PC-9 (cell line): ENCODE measurements at regions of chr16 and their contacts with region 1.

Region 1: DNA sequence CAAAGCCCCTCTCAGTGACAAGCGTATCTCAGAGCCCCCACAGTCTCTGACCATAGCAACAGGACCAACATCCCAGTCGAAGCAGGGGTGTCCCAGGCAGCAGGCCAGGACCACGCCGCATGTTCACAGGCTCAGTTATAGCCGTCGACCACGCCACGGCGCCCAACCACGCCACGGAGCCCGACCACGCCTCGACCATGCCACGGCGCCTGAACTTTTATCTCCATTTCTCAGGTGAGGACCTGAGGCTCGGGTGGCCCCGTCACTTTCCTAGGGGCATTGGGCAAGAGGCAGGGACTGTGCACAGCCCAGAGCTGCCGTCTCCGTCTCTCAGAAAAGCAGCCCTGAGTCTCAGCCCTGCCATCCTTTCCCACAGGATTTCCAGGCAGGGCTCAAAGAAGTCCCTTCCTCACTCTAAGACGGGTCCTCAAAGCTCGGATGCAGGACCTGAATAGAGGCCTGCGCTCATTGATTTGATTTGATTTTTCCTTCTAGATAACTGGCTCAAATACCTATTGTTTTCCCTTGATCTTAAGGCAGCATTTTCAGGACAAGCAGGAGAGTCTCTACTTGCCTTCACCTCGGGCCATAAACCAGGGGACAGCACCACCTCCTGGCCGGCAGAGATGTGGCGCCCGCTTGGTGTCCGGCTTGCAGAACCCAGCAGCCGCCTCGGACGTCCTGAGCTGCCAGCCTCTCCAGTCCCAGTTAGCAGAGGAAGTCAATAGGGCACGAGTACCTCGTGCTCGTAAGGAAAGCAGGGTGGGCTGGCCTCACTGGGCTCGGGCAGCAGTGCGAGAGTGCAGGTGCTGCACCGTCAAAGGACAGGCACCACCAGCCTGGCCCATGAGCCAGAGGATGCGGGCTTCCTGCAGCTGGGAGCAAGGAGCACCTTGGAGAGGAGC is 38.7 kb downstream of the C16orf95 start:
- DNase-seq: peak; percentile 50 to 79
- H3K4me3 ChIP-seq: no peak overlapping the region
- H3K27ac ChIP-seq: no peak overlapping the region
- H3K4me1 ChIP-seq: no peaks in the 10 kb centered on the region
- H3K27me3 ChIP-seq: no peaks in the 10 kb centered on the region
- CTCF ChIP-seq: peak; percentile 94

Region 2: GRCh38 chr16:86563489-86564345 is 714.7 kb before region 1 on chr16:
- CTCF ChIA-PET with region 1: interaction called, 3 read pairs
- POLR2A ChIA-PET with region 1: no interaction called
- intact Hi-C with region 1: loop called (anchors 1 kb)
- DNase-seq: peak; percentile 72 to 82
- H3K4me3 ChIP-seq: peak overlapping the region; percentile 19; the same call in 1 of the 2 replicates
- H3K27ac ChIP-seq: no peak overlapping the region
- H3K4me1 ChIP-seq: no peaks in the 10 kb centered on the region
- H3K27me3 ChIP-seq: peaks cover 42% of the 10 kb centered on the region
- CTCF ChIP-seq: peak; percentile 100

Region 3: DNA sequence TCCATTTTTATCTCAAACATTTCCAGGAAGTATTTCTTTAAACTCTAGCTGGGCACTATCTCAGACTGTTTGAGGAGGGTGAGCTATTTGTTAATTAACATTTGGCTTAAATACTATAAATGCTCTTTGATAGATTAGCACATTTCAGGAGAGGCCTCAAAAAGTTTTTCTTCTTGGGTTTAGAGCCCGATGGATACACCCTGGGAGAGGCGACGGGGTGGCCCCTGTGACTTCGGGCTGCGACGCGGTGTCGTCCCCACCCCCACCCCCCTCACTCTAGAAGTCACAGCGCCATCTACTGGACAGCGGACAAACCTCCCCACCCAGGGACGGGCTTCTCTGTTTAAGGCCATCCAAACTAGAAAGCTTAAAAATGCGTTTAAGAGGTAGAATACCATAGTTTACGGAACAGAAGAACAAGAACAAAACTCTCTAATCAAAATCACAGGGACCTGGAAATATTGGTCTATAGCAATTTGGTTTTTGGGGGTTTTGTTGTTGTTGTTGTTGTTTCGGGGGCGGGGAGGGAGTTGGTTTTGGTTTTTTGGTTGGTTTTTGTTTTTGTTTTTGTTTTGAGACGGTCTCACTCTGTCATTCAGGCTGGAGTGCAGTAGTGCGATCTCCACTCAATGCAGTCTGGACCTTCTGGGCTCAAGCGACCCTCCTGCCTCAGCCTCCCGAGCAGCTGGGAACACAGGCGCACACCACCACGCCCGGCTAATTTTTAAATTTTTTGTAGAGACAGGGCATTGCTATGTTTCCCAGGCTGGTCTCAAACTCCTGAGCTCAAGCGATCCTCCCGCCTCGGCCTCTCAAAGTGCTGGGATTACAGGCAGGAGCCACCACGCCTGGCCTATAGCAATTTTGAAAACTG is 215.6 kb before region 1 on chr16:
- CTCF ChIA-PET with region 1: no interaction called
- POLR2A ChIA-PET with region 1: no interaction called
- intact Hi-C with region 1: loop called (anchors 5 kb)
- DNase-seq: peak in 1 of 2 experiments; percentile 33
- H3K4me3 ChIP-seq: no peak overlapping the region
- H3K27ac ChIP-seq: no peak overlapping the region
- H3K4me1 ChIP-seq: no peaks in the 10 kb centered on the region
- H3K27me3 ChIP-seq: peaks cover 83% of the 10 kb centered on the region
- CTCF ChIP-seq: peak; percentile 88

Region 4: GRCh38 chr16:87203060-87203656 is 75.3 kb before region 1 on chr16:
- CTCF ChIA-PET with region 1: interaction called, 3 read pairs
- POLR2A ChIA-PET with region 1: no interaction called
- intact Hi-C with region 1: loop called (anchors 1 kb)
- DNase-seq: peak; percentile 51 to 67
- H3K4me3 ChIP-seq: no peak overlapping the region
- H3K27ac ChIP-seq: 0 out of 2 replicates have a peak overlapping the region, but pooled peaks have one; percentile 12
- H3K4me1 ChIP-seq: peaks cover 67% of the 10 kb centered on the region
- H3K27me3 ChIP-seq: no peaks in the 10 kb centered on the region
- CTCF ChIP-seq: peak; percentile 93

Region 5: DNA sequence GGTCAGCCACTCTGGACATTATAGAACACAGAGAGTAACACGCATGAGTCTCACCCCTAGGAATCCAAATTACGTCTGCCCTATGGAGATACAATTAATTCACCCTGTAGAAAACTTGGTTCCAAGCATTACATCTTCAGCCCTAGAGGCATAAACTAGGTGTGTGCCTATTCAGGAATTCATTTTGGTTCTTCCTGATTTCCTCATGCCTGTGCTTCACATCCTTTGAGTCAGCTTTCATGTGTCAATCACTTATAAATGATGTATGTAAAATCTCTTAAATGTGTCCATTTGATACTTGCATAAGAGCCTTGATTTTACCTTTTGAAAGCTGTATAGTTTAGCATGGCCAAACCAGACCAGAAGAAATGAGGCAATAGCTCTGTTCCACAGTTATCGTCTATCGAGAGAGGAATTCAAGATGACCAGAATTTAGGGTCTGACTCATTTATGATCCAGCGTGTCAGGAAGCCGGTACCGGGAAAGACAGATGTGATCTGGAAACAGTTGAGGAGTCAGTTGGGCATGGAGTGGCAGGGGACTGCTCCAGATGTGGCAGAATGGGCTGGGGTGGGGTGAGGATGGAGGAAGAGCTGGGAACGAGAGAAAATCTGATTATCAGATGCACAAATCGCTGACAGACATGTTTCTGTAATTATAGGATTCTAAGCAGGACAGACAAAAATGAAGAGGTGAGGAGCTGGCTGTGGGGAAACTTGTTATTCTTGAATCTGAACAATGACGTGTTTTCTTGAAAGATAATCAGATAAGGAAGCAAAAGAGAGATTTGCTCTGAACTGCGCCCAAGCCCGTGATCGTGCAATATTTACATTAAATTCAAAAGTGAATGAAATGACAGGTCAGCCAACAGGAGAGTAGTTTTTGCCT is 38.0 kb before region 1 on chr16:
- CTCF ChIA-PET with region 1: no interaction called
- POLR2A ChIA-PET with region 1: interaction called, 8 read pairs
- intact Hi-C with region 1: loop called (anchors 1 kb)
- DNase-seq: peak; percentile 25 to 92
- H3K4me3 ChIP-seq: peak overlapping the region; percentile 32
- H3K27ac ChIP-seq: peak overlapping the region; percentile 91
- H3K4me1 ChIP-seq: peaks cover 47% of the 10 kb centered on the region
- H3K27me3 ChIP-seq: no peaks in the 10 kb centered on the region
- CTCF ChIP-seq: no peak